Aorta (tissue), 5 donors: ENCODE measurements at regions of chr5 and their contacts with region 1.

Region 1: GRCh38 chr5:150129813-150130492 is 25.7 kb downstream of the PDGFRB start:
- DNase-seq: peak; percentile 84 to 91
- ATAC-seq: peak; percentile 81
- H3K4me3 ChIP-seq: no peak overlapping the region
- H3K27ac ChIP-seq: no peak overlapping the region
- H3K4me1 ChIP-seq: peaks cover 0 to 4% of the 10 kb centered on the region in 2 donors
- H3K27me3 ChIP-seq: no peaks in the 10 kb centered on the region

Region 2: GRCh38 chr5:150000256-150000989 is 129.5 kb before region 1 on chr5 and contains the starts of genes HMGXB3 and TIGD6:
- intact Hi-C with region 1: loop called in 1 of 2 experiments (anchors 5 kb)
- DNase-seq: peak; percentile 96 to 97
- ATAC-seq: peak; percentile 95
- H3K4me3 ChIP-seq: peak within 1 kb of the TSS; percentile 77 to 87
- H3K27ac ChIP-seq: peak within 1 kb of the TSS in 1 of 2 donors; percentile 83
- H3K4me1 ChIP-seq: peaks cover 0 to 2% of the 10 kb centered on the region in 2 donors
- H3K27me3 ChIP-seq: no peaks in the 10 kb centered on the region
- total RNA-seq, gene HMGXB3: 27.6 to 31.0 TPM
- total RNA-seq, gene TIGD6: 3.8 to 4.2 TPM

Region 3: GRCh38 chr5:150161242-150162141 is 31.5 kb after region 1 on chr5:
- intact Hi-C with region 1: loop called (anchors 2 kb)
- DNase-seq: peak; percentile 91 to 97
- ATAC-seq: peak; percentile 84
- H3K4me3 ChIP-seq: no peak overlapping the region
- H3K27ac ChIP-seq: peak overlapping the region in 1 of 2 donors; percentile 26
- H3K4me1 ChIP-seq: peaks cover 0 to 2% of the 10 kb centered on the region in 2 donors
- H3K27me3 ChIP-seq: no peaks in the 10 kb centered on the region

Region 4: GRCh38 chr5:150217873-150218692 is 88.1 kb after region 1 on chr5:
- intact Hi-C with region 1: loop called (anchors 1 to 2 kb)
- DNase-seq: peak; percentile 88 to 92
- ATAC-seq: peak; percentile 85
- H3K4me3 ChIP-seq: no peak overlapping the region
- H3K27ac ChIP-seq: no peak overlapping the region
- H3K4me1 ChIP-seq: no peaks in the 10 kb centered on the region
- H3K27me3 ChIP-seq: no peaks in the 10 kb centered on the region